ENCODE measurements at regions of chr17 and their contacts with region 1.

Region 1: GRCh38 chr17:40098846-40099618 is 1.4 kb downstream of the NR1D1 start:
- DNase-seq: peak; percentile 98
- ATAC-seq: peak; percentile 64
- H3K4me3 ChIP-seq: peak overlapping the region; percentile 51 to 91 (median 78)
- H3K4me3 Mint-ChIP-seq: peak overlapping the region; percentile 77
- H3K27ac ChIP-seq: peak overlapping the region; percentile 92 to 93
- H3K27ac Mint-ChIP-seq: peak overlapping the region; percentile 89
- H3K4me1 ChIP-seq: peaks cover 53 to 70% of the 10 kb centered on the region in 2 donors
- H3K4me1 Mint-ChIP-seq: peaks cover 74% of the 10 kb centered on the region
- H3K27me3 ChIP-seq: no peaks in the 10 kb centered on the region
- H3K27me3 Mint-ChIP-seq: no peaks in the 10 kb centered on the region
- CTCF ChIP-seq: no peak

Region 2: GRCh38 chr17:40062329-40063186 is 36.5 kb before region 1 on chr17 and contains the start of gene THRA:
- CTCF ChIA-PET with region 1: interaction called, 5 read pairs
- POLR2A ChIA-PET with region 1: interaction called, 5 read pairs
- intact Hi-C with region 1: loop called (anchors 1 kb)
- DNase-seq: peak; percentile 85
- ATAC-seq: peak; percentile 92
- H3K4me3 ChIP-seq: peak within 1 kb of the TSS; percentile 53 to 96 (median 95)
- H3K4me3 Mint-ChIP-seq: peak within 1 kb of the TSS; percentile 91
- H3K27ac ChIP-seq: peak within 1 kb of the TSS; percentile 59 to 67
- H3K27ac Mint-ChIP-seq: peak within 1 kb of the TSS; percentile 93
- H3K4me1 ChIP-seq: peaks cover 17 to 23% of the 10 kb centered on the region in 2 donors
- H3K4me1 Mint-ChIP-seq: peaks cover 39% of the 10 kb centered on the region
- H3K27me3 ChIP-seq: peaks cover 0 to 6% (median 1%) of the 10 kb centered on the region in 4 experiments
- H3K27me3 Mint-ChIP-seq: peaks cover 6% of the 10 kb centered on the region
- CTCF ChIP-seq: no peak
- total RNA-seq, gene THRA: 16.8 and 17.1 TPM in 2 replicates

Region 3: DNA sequence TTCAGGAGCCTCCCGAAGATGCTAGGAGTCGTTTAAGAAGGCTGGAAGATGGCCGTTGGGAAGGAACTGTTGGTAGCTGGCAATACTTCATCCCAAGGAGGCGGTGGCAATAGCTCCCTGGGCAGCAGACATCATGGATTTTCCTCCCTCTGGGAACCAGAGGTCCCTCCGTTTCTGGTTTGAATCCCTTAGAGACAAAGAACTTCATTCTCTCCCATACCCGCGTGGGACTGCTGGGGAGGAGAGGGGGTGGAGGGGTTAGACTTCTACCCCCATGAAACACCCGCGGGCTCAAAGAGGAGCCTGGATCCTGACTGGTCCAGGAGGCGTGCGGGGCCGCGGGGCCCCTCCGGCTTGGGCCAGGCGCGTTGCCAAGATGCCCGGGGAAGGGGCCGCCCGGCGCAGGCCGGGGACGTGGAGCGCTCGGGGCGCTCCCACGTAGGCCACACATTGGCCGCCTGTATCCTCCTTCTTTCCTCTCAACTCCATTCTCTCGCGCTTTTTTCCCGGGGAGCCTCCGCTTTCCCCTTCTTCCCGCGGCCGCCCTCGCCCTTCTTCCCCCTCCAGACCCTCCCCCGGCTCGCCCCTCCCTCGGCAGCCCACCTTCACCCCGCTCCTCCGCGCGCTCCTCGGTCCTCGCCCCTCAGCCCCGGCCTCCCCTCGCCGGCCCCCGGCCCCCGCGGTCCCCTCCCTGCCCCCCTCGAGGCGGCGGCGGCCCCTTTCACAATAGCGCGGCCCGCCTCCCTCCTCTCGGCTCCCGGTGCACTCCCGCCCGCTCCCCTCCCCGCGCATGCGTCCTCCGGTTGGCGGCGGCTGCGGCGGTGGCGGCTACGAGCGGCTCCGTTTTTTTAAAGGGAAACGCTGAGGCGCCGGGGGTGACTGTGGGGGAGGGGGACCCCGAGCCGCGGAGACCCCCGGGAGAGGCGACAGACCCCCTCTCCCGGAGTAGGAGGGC is 22.4 kb after region 1 on chr17 and contains the start of gene MSL1:
- CTCF ChIA-PET with region 1: no interaction called
- POLR2A ChIA-PET with region 1: interaction called, 19 read pairs
- intact Hi-C with region 1: no loop called
- DNase-seq: peak; percentile 90
- ATAC-seq: peak; percentile 71
- H3K4me3 ChIP-seq: peak within 1 kb of the TSS; percentile 50 to 81 (median 77)
- H3K4me3 Mint-ChIP-seq: peak within 1 kb of the TSS; percentile 86
- H3K27ac ChIP-seq: peak within 1 kb of the TSS; percentile 55 to 79
- H3K27ac Mint-ChIP-seq: peak within 1 kb of the TSS; percentile 82
- H3K4me1 ChIP-seq: peaks cover 21 to 23% of the 10 kb centered on the region in 2 donors
- H3K4me1 Mint-ChIP-seq: peaks cover 32% of the 10 kb centered on the region
- H3K27me3 ChIP-seq: no peaks in the 10 kb centered on the region
- H3K27me3 Mint-ChIP-seq: no peaks in the 10 kb centered on the region
- CTCF ChIP-seq: no peak
- total RNA-seq, gene MSL1: 125 and 129 TPM in 2 replicates